Stomach (tissue), 19 donors: ENCODE measurements at regions of chr12 and their contacts with region 1.

Region 1: DNA sequence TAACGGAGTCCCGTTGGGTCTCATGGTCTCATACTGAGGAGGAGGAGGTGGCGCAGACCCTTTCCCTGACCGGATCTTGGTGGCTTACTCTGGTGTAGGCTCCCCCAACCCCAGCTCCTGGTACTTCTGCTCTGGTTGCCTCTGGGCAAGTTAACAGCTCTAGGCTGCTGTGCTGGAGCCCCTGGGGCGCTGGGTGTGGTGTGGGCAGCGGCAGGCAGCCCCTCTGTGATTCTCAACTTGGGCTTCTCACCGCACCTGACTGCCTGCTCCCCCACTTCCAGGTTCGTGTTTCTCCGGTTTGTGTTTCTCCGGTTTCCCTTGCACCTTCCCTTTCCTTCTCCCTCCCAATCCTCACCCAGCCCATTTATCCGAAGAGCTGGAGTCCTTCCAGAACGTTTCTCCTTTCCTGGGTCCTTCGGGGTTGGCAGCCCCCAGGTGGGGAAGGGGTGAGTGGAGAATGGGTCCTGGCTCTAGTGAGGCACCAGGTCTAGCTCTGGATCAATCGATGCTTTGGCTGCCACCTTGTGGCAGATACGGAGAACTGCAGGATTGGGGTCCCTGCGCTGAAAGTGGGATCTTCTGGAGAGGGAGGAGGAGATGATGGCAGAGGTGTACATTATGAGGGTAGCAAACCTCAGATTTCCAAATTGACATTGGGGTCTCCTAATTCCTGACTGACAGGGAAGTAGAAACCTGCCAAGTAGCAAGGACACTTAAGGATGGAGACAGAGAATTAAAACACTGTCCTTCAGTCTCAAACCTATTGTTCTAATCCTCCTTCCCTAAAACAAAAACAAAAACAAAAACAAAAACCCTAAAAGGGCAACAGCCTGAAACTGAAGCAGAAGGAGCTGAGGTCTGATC is 8.3 kb downstream of the CISTR start:
- DNase-seq: peak; percentile 61 to 85
- H3K4me3 ChIP-seq: peak overlapping the region in 2 of 4 donors; percentile 6 to 29
- H3K27ac ChIP-seq: no peak overlapping the region
- H3K4me1 ChIP-seq: peaks cover 18 to 29% (median 25%) of the 10 kb centered on the region in 4 donors
- H3K27me3 ChIP-seq: peaks cover 8 to 92% (median 60%) of the 10 kb centered on the region in 3 donors
- CTCF ChIP-seq: peak in 5 of 7 experiments; percentile 87 to 98 (median 93)
- EP300 ChIP-seq: no peak
- POLR2A ChIP-seq: no peak

Region 2: GRCh38 chr12:53379389-53380103 is 364.0 kb before region 1 on chr12:
- intact Hi-C with region 1: no loop called
- DNase-seq: peak; percentile 100
- H3K4me3 ChIP-seq: peak overlapping the region; percentile 53 to 88 (median 68)
- H3K27ac ChIP-seq: peak overlapping the region; percentile 96 to 100 (median 97)
- H3K4me1 ChIP-seq: peaks cover 38 to 49% (median 48%) of the 10 kb centered on the region in 4 donors
- H3K27me3 ChIP-seq: no peaks in the 10 kb centered on the region
- CTCF ChIP-seq: no peak
- EP300 ChIP-seq: no peak
- POLR2A ChIP-seq: no peak

Region 3: DNA sequence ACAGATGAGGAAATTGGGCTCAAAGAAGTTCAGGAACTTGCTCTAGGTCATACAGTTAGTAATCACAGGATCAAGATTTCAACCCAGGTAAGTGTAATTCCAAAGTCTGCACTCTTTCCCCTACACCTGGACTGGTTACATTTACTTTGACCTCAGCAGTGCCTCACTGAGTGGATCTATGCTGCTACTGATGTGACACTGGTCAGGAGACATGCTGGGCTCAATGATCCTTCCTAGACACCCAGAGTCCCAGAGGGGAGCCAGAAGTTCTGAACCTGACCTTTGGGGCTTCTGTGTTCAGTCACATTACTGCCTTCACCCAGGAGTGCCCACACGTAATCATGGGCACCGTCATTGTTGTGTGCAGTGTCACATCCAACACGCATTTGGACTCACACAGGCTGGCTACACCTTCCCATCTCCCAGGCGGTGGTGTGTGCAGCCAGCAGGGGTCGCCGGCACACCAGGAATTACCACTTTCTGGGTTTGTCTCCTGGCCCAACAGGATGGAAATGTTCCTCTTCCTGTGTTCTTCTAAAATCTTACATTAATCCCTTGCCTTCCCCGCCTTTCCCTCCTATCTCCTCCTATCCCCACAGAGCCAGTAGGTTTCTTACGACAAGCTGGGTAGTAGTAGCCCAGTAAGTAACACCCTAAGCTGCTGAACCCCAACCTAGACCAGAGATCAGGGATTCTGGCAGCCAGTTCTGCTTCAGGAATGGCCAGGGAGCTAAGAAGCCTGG is 41.8 kb before region 1 on chr12:
- intact Hi-C with region 1: loop called (anchors 5 kb)
- DNase-seq: peak; percentile 85 to 91
- H3K4me3 ChIP-seq: no peak overlapping the region
- H3K27ac ChIP-seq: no peak overlapping the region
- H3K4me1 ChIP-seq: peaks cover 3 to 12% (median 7%) of the 10 kb centered on the region in 4 donors
- H3K27me3 ChIP-seq: peaks cover 0 to 98% (median 57%) of the 10 kb centered on the region in 3 donors
- CTCF ChIP-seq: peak in 5 of 7 experiments; percentile 76 to 95 (median 91)
- EP300 ChIP-seq: no peak
- POLR2A ChIP-seq: no peak

Region 4: GRCh38 chr12:54701940-54702592 is 958.6 kb after region 1 on chr12:
- intact Hi-C with region 1: no loop called
- DNase-seq: peak in 1 of 2 donors; percentile 78
- H3K4me3 ChIP-seq: no peak overlapping the region
- H3K27ac ChIP-seq: no peak overlapping the region
- H3K4me1 ChIP-seq: no peaks in the 10 kb centered on the region
- H3K27me3 ChIP-seq: no peaks in the 10 kb centered on the region
- CTCF ChIP-seq: peak in 4 of 7 experiments; percentile 47 to 56 (median 52)
- EP300 ChIP-seq: no peak
- POLR2A ChIP-seq: no peak